HepG2 (cell line): ENCODE measurements at regions of chr18 and their contacts with region 1.

Region 1: DNA sequence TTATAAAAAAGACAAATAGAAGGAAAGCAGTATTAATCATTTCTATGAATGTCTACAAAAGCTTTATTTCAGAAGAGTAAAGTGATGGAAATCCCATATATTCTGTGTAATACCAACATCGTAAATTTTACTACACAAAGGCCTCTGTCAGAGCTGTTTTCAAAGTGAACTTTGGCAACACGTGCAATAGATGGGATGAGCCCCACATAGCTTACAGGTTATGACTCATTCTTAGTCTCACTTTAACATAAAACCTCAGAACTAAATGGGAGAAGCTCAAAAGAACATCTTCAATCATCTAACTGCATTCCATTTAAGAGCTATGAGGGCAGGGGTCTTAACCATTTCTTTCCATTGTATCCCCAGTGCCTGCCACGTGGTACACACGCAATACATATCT is 11.5 kb downstream of the VPS4B start:
- DNase-seq: peak; percentile 67
- ATAC-seq: peak; percentile 81
- H3K4me3 ChIP-seq: no peak overlapping the region; a peak in 2 of 6 replicates
- H3K27ac ChIP-seq: no peak overlapping the region
- H3K4me1 ChIP-seq: peaks cover 28% of the 10 kb centered on the region
- H3K27me3 ChIP-seq: no peaks in the 10 kb centered on the region
- CTCF ChIP-seq: no peak
- EP300 ChIP-seq: no peak
- POLR2A ChIP-seq: no peak
- RAD21 ChIP-seq: no peak

Region 2: DNA sequence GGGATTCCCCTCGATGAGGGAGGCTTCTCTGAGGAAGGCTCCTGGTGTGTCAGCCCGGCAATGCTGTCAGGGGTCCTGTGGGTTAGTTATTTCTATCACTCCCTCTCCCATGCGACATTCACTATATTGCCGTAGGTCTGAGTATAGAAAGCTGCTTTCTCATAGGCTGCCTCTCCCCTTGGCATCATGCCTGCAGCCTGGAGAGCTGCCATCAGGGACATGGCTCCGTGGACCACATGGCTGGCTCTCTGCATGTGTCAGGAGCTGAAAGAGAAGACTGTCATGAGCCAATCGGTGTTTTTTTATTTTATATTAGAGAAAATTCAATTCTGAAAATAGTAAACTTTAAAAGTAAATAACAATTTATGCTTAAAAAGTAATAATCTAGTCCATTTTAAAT is 1879.6 kb before region 1 on chr18:
- CTCF ChIA-PET with region 1: no interaction called
- POLR2A ChIA-PET with region 1: no interaction called
- in situ Hi-C with region 1: no loop called
- intact Hi-C with region 1: no loop called
- DNase-seq: no peak
- ATAC-seq: no peak
- H3K4me3 ChIP-seq: no peak overlapping the region
- H3K27ac ChIP-seq: no peak overlapping the region
- H3K4me1 ChIP-seq: no peaks in the 10 kb centered on the region
- H3K27me3 ChIP-seq: peaks cover 0 to 6% of the 10 kb centered on the region in 2 experiments; a peak in 1 of 5 replicates
- CTCF ChIP-seq: no peak
- EP300 ChIP-seq: no peak
- POLR2A ChIP-seq: no peak
- RAD21 ChIP-seq: no peak

Region 3: GRCh38 chr18:63367053-63367953 is 43.5 kb before region 1 on chr18 and contains the start of gene KDSR:
- CTCF ChIA-PET with region 1: no interaction called
- POLR2A ChIA-PET with region 1: interaction called, 13 read pairs
- in situ Hi-C with region 1: no loop called
- intact Hi-C with region 1: loop called (anchors 2 kb)
- DNase-seq: peak; percentile 94
- ATAC-seq: peak; percentile 96
- H3K4me3 ChIP-seq: peak within 1 kb of the TSS; percentile 80 to 96 (median 82)
- H3K27ac ChIP-seq: peak within 1 kb of the TSS; percentile 96
- H3K4me1 ChIP-seq: peaks cover 38% of the 10 kb centered on the region
- H3K27me3 ChIP-seq: no peaks in the 10 kb centered on the region; a peak in 1 of 5 replicates
- CTCF ChIP-seq: no peak
- EP300 ChIP-seq: peak in 1 of 2 experiments; percentile 14; a peak in 2 of 4 replicates
- POLR2A ChIP-seq: peak; percentile 92 to 97
- RAD21 ChIP-seq: peak; percentile 50; the same call in 1 of the 2 replicates
- total RNA-seq, gene KDSR: 8.2 and 10.4 TPM in 2 replicates